ENCODE measurements at regions of chr5 and their contacts with region 1.

Region 1: GRCh38 chr5:43105369-43106289 is 15.1 kb upstream of the ZNF131 start:
- DNase-seq: peak; percentile 96
- H3K4me3 Mint-ChIP-seq: peak overlapping the region; percentile 87
- H3K27ac Mint-ChIP-seq: peak overlapping the region; percentile 90
- H3K4me1 Mint-ChIP-seq: peaks cover 39% of the 10 kb centered on the region
- H3K27me3 Mint-ChIP-seq: no peaks in the 10 kb centered on the region

Region 2: DNA sequence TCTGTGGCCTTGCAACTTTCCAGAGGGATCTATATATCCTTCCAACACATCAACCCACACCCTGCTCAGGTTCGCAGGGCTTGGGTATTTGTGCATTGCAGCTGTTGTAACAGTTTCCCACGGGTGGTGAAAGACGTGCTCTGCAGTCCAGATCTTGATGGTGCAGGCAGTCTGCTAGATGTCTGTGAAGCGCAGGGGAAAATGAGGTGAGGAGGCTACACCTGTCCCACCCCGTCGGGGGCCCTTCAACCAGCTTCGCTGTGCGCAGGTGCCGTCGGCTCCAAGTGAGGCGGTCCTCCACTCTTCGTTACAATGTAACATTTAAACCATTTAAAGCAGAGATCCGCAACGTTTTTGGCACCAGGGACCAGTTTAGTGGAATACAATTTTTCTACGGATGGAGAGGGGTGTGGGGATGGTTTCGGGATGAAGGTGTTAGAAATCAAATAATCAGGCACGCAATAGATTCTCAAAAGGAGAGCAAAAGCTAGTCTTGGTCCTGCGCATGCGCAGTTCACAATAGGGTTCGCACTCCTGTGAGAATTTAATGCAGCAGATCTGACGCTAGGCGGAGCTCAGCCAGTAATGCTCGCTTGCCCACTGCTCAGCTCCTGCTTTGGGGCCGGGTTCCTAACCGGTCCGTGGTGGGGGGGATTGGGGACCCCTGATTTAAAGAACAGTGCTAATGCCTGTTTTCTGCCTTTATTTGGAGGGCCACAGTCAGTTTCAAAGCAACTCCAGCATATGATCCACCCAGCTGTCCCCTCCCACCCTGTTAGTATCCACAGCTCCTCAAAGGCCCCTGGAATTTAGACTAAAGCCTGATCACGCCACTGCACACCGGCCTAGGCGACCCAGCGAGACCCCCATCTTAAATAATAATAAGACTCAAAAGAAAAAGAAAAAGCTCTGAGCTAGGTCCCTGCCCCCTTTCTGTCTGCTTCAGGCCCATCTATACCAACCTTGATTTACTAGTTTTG is 196.8 kb before region 1 on chr5:
- intact Hi-C with region 1: loop called (anchors 2 kb)
- DNase-seq: peak; percentile 96
- H3K4me3 Mint-ChIP-seq: peak overlapping the region; percentile 83
- H3K27ac Mint-ChIP-seq: peak overlapping the region; percentile 1
- H3K4me1 Mint-ChIP-seq: peaks cover 6% of the 10 kb centered on the region
- H3K27me3 Mint-ChIP-seq: peaks cover 35% of the 10 kb centered on the region

Region 3: GRCh38 chr5:43019614-43020293 is 85.9 kb before region 1 on chr5:
- intact Hi-C with region 1: loop called (anchors 2 kb)
- DNase-seq: peak; percentile 95
- H3K4me3 Mint-ChIP-seq: peak overlapping the region; percentile 97
- H3K27ac Mint-ChIP-seq: peak overlapping the region; percentile 100
- H3K4me1 Mint-ChIP-seq: peaks cover 45% of the 10 kb centered on the region
- H3K27me3 Mint-ChIP-seq: no peaks in the 10 kb centered on the region

Region 4: GRCh38 chr5:43051668-43052067 is 54.0 kb before region 1 on chr5:
- intact Hi-C with region 1: no loop called
- DNase-seq: no peak
- H3K4me3 Mint-ChIP-seq: no peak overlapping the region
- H3K27ac Mint-ChIP-seq: no peak overlapping the region
- H3K4me1 Mint-ChIP-seq: peaks cover 4% of the 10 kb centered on the region
- H3K27me3 Mint-ChIP-seq: peaks cover 5% of the 10 kb centered on the region

Region 5: DNA sequence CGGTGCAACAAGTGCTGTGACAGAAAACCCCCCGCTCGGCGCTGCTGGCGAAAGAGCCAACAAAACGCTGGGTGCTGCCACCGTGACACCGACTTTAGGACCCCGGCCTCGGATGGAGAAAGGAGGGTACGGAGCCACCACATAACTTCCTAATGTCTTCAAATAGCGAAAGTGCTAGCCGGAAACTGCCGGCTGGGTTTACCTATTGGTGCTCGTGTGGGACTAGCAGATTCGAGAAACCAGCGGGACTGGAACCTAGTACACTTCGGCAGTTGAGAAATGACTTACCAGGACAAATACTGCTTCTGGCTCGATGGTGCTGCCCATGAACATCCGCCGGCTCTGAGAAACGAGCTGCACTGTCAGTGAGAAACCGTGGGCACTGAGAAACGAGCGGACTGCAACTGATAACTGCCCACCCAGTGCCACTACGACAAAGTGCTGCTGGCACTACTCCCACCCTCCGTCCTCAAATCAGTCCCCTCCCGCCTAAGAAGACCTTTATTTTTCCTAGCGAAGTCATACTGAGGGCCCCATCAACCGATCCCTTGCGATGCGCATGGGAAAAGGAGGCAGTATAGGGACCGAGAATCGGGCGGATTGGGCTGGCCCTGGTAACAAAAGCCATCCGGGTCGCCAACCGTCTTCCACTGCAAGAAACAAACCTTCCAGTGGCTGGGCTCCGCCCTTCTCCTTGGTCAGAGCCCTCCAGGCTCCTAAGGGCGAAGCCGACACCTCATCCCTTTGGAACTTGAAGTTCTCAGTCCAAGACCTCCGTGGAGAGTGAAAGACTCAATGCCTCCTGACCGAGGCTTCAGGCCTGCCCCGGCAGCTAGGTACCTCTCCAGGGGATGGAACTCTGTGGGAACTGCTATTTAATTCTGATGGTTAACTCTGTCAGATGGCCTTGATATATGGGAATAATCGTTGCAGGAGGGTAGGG is 38.6 kb before region 1 on chr5:
- intact Hi-C with region 1: loop called (anchors 2 kb)
- DNase-seq: peak; percentile 96
- H3K4me3 Mint-ChIP-seq: peak overlapping the region; percentile 92
- H3K27ac Mint-ChIP-seq: peak overlapping the region; percentile 100
- H3K4me1 Mint-ChIP-seq: peaks cover 32% of the 10 kb centered on the region
- H3K27me3 Mint-ChIP-seq: no peaks in the 10 kb centered on the region

Region 6: DNA sequence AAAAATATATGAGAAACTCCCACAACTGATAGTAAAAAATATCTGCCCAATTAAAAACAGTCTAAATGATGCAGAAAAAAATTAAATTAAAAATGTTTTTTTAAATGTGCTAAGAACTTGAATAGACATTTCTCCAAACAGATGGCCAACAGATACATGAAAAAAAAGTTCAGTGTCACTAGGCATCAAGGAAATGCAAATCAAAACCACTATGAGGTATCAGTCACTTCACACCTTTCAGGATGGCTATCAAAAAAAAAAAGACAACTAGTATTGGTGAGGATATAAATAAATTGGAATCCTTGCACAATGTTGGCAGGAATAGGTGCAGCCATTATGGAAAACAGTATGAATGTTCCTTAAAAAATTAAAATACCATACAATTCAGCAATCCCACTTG is 31.7 kb after region 1 on chr5:
- intact Hi-C with region 1: no loop called
- DNase-seq: no peak
- H3K4me3 Mint-ChIP-seq: no peak overlapping the region
- H3K27ac Mint-ChIP-seq: no peak overlapping the region
- H3K4me1 Mint-ChIP-seq: peaks cover 24% of the 10 kb centered on the region
- H3K27me3 Mint-ChIP-seq: no peaks in the 10 kb centered on the region

Region 7: DNA sequence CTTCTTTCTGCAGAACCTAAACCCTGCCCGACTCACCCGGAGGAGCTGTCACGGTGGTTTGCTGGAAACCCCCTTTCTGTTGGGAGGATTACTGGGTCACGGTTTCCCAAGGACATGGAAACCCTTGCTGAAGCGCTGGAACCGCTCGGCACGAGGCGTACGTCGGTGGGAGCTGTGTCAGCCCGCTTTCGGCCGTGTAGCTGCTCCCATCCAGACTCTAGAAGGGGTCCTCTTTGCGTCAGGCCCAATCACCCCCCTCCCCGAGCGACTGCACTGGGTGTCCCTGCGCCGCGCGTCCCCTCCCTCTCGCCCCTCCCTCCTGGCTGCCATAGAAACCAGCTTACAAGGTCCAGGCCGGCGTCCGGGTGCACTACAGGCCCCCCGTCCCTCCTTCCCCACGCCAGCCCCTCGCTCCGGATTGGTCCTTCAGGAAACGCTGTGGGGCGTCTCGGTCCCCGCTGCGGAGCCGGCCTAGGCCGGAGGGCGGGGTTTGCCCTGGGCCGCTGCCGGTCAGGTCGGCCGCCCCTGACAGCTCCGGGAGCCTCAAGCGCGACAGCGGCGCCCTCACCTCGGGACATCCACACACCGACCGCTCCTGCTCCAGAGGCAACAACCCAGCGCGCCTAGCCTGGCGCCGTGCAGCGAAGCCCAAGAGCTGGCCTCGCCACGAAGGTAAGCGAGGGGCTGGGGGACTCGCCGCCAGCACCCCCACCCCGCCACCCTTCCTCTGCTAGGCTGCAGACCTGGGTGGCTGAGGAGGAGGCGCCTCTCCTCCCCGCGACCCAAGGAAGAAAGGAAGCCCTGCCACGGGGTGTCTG is 86.3 kb after region 1 on chr5 and contains the start of gene NIM1K:
- intact Hi-C with region 1: loop called (anchors 1 kb)
- DNase-seq: peak; percentile 85
- H3K4me3 Mint-ChIP-seq: peak within 1 kb of the TSS; percentile 86
- H3K27ac Mint-ChIP-seq: peak within 1 kb of the TSS; percentile 86
- H3K4me1 Mint-ChIP-seq: peaks cover 31% of the 10 kb centered on the region
- H3K27me3 Mint-ChIP-seq: peaks cover 15% of the 10 kb centered on the region
- total RNA-seq, gene NIM1K: 0.82 and 0.97 TPM in 2 replicates

Region 8: GRCh38 chr5:43389679-43390329 is 284.2 kb after region 1 on chr5:
- intact Hi-C with region 1: loop called (anchors 1 kb)
- DNase-seq: peak; percentile 86
- H3K4me3 Mint-ChIP-seq: no peak overlapping the region
- H3K27ac Mint-ChIP-seq: no peak overlapping the region
- H3K4me1 Mint-ChIP-seq: peaks cover 26% of the 10 kb centered on the region
- H3K27me3 Mint-ChIP-seq: no peaks in the 10 kb centered on the region

Region 9: DNA sequence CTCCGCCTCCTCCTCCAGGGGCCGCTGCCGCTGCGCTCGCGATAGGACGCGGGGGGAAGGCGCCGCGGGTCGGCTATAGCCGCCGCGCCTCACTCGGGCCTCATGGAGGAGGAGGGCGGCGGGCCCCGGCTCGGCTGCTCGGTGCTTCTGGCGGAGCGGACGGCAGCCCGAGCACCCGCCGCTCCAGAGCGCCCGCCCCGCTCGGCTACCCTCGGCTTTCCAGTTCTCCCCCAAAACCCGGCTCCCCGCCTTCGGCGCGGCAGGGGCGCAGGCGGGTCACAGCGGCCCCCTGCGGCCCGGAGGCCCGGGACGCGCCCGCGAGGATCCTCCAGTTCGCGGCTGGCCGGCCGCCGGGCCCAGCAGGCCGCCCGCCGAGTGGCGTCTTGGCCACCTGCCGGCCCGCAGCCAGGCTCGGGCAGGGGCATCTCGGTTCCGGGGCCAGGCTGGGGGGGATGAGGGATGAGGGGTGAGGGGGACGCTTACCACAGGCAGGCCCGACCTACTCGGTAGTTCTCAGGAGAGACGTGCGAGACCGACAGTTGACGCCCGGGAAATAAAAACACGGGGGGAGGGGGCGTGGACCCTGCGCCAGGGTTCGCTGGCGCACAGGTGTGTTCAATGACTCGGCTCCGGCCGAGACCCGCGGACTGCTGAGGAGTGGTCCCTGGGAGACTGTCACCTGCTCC is 451.4 kb after region 1 on chr5 and contains the start of gene PAIP1:
- intact Hi-C with region 1: loop called (anchors 10 kb)
- DNase-seq: peak; percentile 96
- H3K4me3 Mint-ChIP-seq: peak within 1 kb of the TSS; percentile 91
- H3K27ac Mint-ChIP-seq: peak within 1 kb of the TSS; percentile 90
- H3K4me1 Mint-ChIP-seq: peaks cover 12% of the 10 kb centered on the region
- H3K27me3 Mint-ChIP-seq: peaks cover 13% of the 10 kb centered on the region
- total RNA-seq, gene PAIP1: 60.2 and 64.1 TPM in 2 replicates